ENCODE measurements at regions of chr5 and their contacts with region 1.

Region 1: DNA sequence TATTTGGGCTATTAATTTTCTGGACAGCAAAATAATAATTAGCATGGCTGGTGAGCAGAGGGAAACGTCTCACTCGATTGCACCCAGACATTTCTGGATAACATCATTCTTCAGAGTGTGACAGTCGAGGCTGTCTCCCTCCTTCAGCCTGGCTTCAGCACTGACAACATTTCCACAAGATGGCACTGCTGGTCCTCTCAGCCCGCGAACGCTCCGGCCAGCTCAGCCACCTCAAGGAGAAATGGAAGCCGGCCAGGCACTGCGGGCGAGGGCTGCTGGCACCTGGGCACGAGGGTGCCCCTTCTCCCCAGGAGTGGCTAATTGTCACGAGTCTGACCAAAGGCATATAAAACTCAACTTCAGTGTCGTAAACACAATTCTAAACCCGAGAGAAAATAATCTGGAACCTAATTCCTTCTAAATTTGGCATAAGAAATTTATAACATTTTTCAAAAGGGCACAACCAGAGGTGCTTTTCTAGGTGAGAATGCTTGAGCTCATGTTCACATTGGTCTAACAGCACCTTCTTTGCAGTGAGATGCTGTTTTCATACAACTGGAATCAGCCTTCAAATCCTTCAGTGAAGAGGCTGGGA is 65.9 kb downstream of the DAP start:
- DNase-seq: no peak
- H3K4me3 ChIP-seq: no peak overlapping the region
- H3K27me3 ChIP-seq: no peaks in the 10 kb centered on the region
- CTCF ChIP-seq: peak; percentile 83

Region 2: GRCh38 chr5:10712574-10713517 is 17.7 kb after region 1 on chr5:
- CTCF ChIA-PET with region 1: no interaction called
- POLR2A ChIA-PET with region 1: no interaction called
- DNase-seq: no peak
- H3K4me3 ChIP-seq: no peak overlapping the region
- H3K27me3 ChIP-seq: no peaks in the 10 kb centered on the region
- CTCF ChIP-seq: no peak

Region 3: DNA sequence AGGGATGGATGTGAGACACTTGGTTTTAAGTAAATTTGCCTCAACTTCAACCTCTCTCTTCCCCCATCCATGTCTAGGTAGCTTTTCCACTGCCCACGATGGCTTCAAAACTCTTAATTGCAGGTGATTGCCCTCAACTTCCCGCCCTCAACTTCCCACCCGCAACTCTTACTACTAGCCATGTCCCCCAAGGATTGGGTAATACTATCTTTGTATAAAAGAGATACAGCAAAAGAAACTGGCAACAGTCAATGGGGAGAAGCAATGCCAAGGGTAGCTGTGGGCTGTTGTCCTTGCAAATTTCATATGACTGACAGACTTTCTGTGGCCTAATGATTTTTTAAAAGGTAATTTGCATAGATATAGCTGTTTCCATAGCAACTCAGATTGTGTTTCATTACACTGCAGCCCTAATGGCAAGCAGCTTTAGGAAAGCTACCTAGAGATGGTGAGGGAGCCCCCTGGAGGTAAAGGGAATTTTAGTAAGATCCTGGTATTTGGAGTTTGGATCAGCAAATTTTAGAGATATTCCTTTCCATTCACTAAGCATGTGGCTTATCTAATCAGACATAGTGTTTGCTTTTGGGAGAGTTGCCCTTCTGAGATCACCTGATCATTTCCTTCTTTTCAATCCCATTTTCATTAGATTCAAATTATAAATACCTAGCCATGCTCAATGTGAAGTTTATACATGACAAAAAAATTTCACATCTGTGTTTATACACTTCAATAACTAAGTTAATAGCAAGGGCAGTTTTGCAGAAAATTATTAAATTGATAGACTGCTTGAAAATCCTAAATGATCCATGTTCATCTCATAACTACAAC is 487.5 kb after region 1 on chr5:
- CTCF ChIA-PET with region 1: interaction called, 10 read pairs
- POLR2A ChIA-PET with region 1: no interaction called
- DNase-seq: no peak
- H3K4me3 ChIP-seq: no peak overlapping the region
- H3K27me3 ChIP-seq: no peaks in the 10 kb centered on the region
- CTCF ChIP-seq: peak; percentile 70